Heart left ventricle (tissue), 16 donors: ENCODE measurements at regions of chr6 and their contacts with region 1.

Region 1: GRCh38 chr6:129498950-129499842 is 210.8 kb downstream of the ARHGAP18 start:
- DNase-seq: peak in 1 of 5 donors; percentile 49
- ATAC-seq: peak in 2 of 4 donors; percentile 25 to 35
- H3K4me3 ChIP-seq: no peak overlapping the region
- H3K27ac ChIP-seq: peak overlapping the region in 1 of 12 donors; percentile 7
- H3K4me1 ChIP-seq: peaks cover 0 to 53% (median 28%) of the 10 kb centered on the region in 12 donors
- H3K27me3 ChIP-seq: no peaks in the 10 kb centered on the region
- CTCF ChIP-seq: peak; percentile 39 to 70 (median 65)
- POLR2A ChIP-seq: no peak

Region 2: DNA sequence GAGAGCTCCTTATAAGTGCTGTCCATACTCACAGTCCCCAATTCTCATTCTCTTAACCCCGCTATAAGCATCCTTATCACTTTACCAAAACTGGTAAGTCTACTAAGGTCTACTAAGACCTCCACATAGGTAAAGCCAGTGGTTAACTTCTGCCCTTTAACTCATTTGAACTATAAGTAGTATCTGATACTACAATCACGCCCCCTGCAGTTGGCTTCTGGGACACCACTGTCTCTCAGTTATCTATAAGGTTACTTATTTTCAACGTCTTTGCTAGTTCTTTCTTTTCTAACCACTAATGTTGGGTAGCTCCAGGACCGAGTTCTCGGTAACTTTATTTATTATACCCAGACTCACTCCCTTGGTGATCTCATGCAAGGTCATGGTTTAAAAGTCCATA is 68.2 kb after region 1 on chr6:
- intact Hi-C with region 1: loop called in 2 of 10 experiments (anchors 5 to 10 kb)
- DNase-seq: no peak
- ATAC-seq: no peak
- H3K4me3 ChIP-seq: no peak overlapping the region
- H3K27ac ChIP-seq: no peak overlapping the region
- H3K4me1 ChIP-seq: no peaks in the 10 kb centered on the region
- H3K27me3 ChIP-seq: no peaks in the 10 kb centered on the region
- CTCF ChIP-seq: peak in 8 of 12 donors; percentile 14 to 39 (median 28)
- POLR2A ChIP-seq: no peak

Region 3: DNA sequence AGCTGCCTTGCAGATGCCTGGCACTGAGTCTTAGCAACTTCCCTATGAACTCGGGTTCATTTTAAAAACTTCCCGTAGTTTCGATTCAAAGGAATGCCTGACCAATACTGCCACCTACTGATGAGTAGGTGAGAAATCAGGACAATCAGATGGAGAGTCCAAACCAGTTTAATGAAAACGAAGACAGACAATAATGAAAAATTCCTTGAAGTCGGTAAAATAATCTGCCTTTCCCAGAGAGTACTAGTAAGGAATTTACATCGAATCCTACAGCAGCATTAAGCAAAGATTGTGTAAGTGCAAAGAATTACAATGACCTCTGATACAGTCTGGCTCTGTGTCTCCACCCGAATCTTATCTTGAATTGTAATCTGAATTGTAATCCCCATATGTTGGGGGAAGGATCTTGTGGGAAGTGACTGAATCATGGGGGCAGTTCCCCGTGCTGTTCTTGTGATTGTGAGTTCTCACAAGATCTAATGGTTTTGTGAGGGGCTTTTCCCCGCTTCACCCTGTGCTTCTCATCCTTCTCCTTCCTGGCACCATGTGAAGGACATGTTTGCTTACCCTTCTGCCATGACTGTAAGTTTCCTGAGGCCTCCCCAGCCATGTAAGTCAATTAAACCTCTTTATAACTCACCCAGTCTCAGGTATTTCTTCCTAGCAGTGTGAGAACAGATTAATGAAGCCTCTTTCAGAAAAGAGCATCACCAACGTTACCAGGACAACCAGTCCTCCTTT is 76.4 kb after region 1 on chr6:
- intact Hi-C with region 1: loop called in 8 of 10 experiments (anchors 1 to 5 kb)
- DNase-seq: no peak
- ATAC-seq: peak; percentile 47 to 72 (median 70)
- H3K4me3 ChIP-seq: peak overlapping the region in 9 of 12 donors; percentile 11 to 47 (median 30)
- H3K27ac ChIP-seq: peak overlapping the region in 1 of 12 donors; percentile 23
- H3K4me1 ChIP-seq: peaks cover 0 to 8% (median 0%) of the 10 kb centered on the region in 12 donors
- H3K27me3 ChIP-seq: no peaks in the 10 kb centered on the region
- CTCF ChIP-seq: peak; percentile 56 to 82 (median 66)
- POLR2A ChIP-seq: no peak

Region 4: DNA sequence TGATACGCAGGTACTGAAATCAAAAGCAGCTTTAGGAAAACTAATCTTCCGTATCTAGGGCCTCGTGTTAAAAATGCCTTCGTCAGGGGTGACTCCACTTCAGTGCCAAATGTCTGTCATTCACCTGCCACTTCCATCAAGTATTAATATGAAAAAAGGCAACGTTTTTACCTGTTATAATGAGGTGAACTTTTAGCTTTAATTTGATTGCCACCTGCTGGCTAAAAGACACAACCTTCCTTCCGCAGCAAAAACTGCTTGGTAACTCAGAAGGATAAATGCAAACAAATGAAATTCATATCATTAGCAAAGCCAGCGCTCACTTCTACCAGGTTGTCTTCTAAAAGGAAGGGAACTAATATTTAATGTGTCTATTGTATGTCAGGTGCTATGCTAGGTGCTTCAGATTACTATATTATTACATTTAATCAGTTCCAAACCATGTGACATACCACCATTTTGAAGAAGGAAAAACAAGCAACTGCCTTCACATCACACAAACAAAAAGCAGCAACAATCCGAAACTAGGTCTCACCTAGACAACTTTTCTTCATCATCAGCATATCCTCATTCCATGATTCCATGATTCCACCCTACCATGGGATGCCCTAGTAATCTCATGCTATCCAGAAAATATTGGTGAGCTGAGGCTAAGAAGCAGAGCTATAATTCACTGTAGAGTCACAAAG is 231.4 kb after region 1 on chr6:
- intact Hi-C with region 1: loop called in 2 of 10 experiments (anchors 1 to 5 kb)
- DNase-seq: no peak
- ATAC-seq: no peak
- H3K4me3 ChIP-seq: no peak overlapping the region
- H3K27ac ChIP-seq: no peak overlapping the region
- H3K4me1 ChIP-seq: peaks cover 0 to 6% (median 0%) of the 10 kb centered on the region in 12 donors
- H3K27me3 ChIP-seq: no peaks in the 10 kb centered on the region
- CTCF ChIP-seq: peak; percentile 38 to 70 (median 58)
- POLR2A ChIP-seq: no peak

Region 5: GRCh38 chr6:129748212-129748900 is 249.2 kb after region 1 on chr6:
- intact Hi-C with region 1: loop called in 1 of 10 experiments (anchors 10 kb)
- DNase-seq: peak in 3 of 5 donors; percentile 19 to 31 (median 27)
- ATAC-seq: peak; percentile 28 to 78 (median 56)
- H3K4me3 ChIP-seq: peak overlapping the region in 3 of 12 donors; percentile 2 to 5 (median 3)
- H3K27ac ChIP-seq: peak overlapping the region in 11 of 12 donors; percentile 2 to 87 (median 40)
- H3K4me1 ChIP-seq: peaks cover 0 to 57% (median 23%) of the 10 kb centered on the region in 12 donors
- H3K27me3 ChIP-seq: no peaks in the 10 kb centered on the region
- CTCF ChIP-seq: no peak
- POLR2A ChIP-seq: no peak